ENCODE measurements at regions of chr18 and their contacts with region 1.

Region 1: DNA sequence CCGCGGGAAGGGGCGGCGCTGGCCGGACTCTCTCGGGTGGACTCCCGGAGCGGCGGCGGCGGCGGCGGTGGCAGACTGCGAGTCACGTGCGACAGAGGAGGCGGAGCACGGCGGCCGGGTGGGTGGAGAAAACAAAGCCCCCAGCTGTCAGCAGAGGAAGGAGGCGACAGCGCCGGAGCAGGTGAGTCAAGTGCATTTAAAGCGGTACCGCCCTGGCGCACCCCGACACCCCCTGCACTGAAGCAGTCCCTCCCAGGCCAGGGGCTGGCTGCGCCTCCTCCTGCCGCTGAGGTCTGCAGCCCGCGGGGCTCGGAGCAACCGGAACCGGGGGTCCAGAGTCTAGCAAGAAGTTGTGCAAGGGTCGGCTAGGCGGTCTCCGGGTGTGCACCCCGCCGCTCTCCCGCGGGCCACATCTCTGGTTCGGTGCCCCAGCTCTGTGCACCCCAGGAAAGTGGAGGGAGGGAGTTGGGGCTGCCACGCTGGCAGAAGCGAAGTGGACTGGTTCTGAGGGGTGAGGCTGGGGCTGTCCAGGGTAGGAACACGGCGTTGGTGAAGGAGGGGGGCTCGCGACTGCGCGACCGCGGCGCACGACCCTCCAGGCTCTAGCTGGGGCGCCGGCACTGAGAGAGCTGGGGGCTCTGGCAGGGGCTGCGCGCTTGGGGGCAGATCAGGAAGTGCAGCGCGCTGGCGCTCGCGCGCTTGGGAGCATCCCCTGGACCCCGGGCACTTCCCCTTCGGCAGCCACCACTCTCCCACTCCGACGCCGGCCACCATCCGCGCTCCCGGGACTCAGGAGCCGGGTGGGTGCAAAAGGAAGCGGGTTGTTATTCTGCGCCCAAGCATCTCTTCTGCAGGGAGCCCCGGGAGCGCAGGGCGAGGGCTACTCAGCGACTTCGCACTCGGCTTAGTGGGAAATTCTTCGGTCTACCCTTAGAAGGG is 64.0 kb upstream of the MAPRE2 start:
- DNase-seq: peak; percentile 83
- ATAC-seq: peak; percentile 79
- H3K4me3 ChIP-seq: peak overlapping the region; percentile 81 to 96 (median 89)
- H3K4me3 Mint-ChIP-seq: peak overlapping the region; percentile 92
- H3K27ac ChIP-seq: peak overlapping the region in 1 of 2 donors; percentile 16
- H3K27ac Mint-ChIP-seq: no peak overlapping the region
- H3K4me1 ChIP-seq: peaks cover 17 to 26% of the 10 kb centered on the region in 2 donors
- H3K4me1 Mint-ChIP-seq: peaks cover 26% of the 10 kb centered on the region
- H3K27me3 ChIP-seq: peaks cover 0 to 20% (median 11%) of the 10 kb centered on the region in 4 experiments
- H3K27me3 Mint-ChIP-seq: peaks cover 26% of the 10 kb centered on the region
- CTCF ChIP-seq: no peak

Region 2: GRCh38 chr18:34959989-34960388 is 17.2 kb before region 1 on chr18:
- CTCF ChIA-PET with region 1: no interaction called
- POLR2A ChIA-PET with region 1: no interaction called
- intact Hi-C with region 1: loop called (anchors 2 kb)
- DNase-seq: no peak
- ATAC-seq: no peak
- H3K4me3 ChIP-seq: no peak overlapping the region
- H3K4me3 Mint-ChIP-seq: no peak overlapping the region
- H3K27ac ChIP-seq: no peak overlapping the region
- H3K27ac Mint-ChIP-seq: no peak overlapping the region
- H3K4me1 ChIP-seq: no peaks in the 10 kb centered on the region
- H3K4me1 Mint-ChIP-seq: no peaks in the 10 kb centered on the region
- H3K27me3 ChIP-seq: peaks cover 0 to 7% (median 2%) of the 10 kb centered on the region in 4 experiments
- H3K27me3 Mint-ChIP-seq: peaks cover 48% of the 10 kb centered on the region
- CTCF ChIP-seq: no peak